Activated CD4-positive, alpha-beta T cell treated with anti-CD3 and anti-CD28 coated beads for 36 hours (primary cell): ENCODE measurements at regions of chr6 and their contacts with region 1.

Region 1: DNA sequence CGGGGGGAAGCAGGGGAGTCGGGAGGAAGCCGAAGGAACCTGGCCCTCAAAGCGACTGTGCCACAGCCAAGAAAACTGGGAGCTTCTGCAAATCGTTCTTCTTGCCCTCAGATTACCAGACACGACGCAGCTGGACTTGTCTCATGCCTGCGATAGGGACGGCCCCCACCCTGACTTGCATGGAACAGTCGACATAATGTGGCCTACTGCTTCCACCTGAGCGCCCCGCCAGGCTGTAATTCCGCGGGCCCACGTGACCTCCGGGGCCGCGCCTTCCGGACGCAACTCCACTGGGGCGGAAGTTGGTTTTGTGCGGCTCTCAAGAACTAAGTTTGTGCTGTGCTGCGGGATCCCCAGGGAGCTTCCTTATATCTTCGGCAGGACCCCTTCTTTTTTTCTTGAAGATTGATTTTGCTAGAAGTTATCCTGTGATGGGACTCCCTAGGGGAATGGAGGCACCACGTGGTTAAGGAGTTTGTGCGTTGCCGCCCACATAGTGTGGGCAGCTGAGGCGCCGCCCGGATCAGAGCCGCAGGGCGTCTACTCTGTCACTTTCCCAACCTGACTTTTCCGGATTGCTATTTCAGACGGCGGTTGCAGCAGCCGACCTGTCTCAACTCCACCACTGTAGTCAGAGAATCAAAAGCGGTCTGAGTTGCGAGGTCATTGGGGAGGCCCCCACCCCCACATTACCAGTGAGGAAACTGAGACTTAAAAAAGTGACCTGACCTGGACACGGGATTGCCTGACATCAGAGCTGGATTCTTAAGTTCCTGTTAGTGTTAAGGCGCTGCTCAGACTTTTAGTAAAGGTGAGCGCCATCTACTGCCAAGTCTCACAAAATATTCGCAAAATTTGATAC is 540 bp upstream of the CD164 start:
- DNase-seq: peak; percentile 95
- ATAC-seq: peak; percentile 67
- H3K4me3 Mint-ChIP-seq: peak overlapping the region; percentile 98
- H3K27ac Mint-ChIP-seq: peak overlapping the region; percentile 99
- H3K4me1 Mint-ChIP-seq: peaks cover 25% of the 10 kb centered on the region
- H3K27me3 Mint-ChIP-seq: no peaks in the 10 kb centered on the region

Region 2: DNA sequence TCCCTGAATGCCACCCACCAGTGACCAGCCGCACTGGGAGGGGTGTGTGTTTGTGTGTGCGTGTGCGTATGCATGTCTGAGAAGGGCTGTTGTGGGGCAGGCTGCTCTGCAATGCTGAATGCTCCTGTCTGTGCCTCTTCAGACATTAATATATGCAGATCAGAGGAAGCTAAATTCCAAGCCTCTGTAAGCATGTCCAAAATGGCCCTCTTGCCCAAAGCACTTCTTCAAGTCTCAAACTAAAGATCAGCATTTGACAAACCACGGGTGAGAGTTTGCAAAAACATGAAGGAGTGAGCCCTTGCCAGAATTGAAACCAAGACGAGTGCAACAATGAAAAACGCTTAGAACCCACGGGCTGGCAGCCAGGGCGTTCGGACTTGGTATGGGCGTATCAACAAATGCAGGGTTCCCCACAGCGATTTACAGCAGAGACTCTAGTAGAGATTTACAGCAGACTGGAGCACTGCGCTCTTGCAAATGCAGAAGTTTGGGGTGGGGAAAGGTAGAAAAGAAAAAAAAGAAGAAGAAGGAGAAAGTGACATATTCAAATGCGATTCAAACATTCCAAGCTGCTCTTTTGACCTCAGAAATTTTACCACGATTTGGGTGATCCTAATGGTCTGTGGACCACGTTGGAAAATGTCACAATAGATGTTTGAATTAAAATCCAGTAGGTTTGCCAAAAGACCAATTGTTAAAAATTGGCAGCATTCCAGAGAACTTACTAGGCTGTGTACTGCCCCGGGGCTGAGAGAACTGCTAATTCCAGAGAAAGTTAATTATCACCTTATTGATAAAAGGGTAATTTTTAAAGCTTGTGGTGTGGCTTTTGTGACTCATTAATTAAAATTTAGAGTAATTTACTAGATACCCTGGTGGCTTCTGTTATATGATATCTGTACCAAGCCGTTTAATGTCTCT is 1562.2 kb before region 1 on chr6:
- CTCF ChIA-PET with region 1: no interaction called
- POLR2A ChIA-PET with region 1: no interaction called
- intact Hi-C with region 1: loop called in 1 of 2 experiments (anchors 5 kb)
- DNase-seq: peak; percentile 60
- ATAC-seq: no peak
- H3K4me3 Mint-ChIP-seq: peak overlapping the region; percentile 87
- H3K27ac Mint-ChIP-seq: peak overlapping the region; percentile 98
- H3K4me1 Mint-ChIP-seq: peaks cover 84% of the 10 kb centered on the region
- H3K27me3 Mint-ChIP-seq: no peaks in the 10 kb centered on the region

Region 3: GRCh38 chr6:108260809-108261569 is 1121.8 kb before region 1 on chr6 and contains the start of gene SNX3:
- CTCF ChIA-PET with region 1: no interaction called
- POLR2A ChIA-PET with region 1: no interaction called
- intact Hi-C with region 1: loop called in 1 of 2 experiments (anchors 5 kb)
- DNase-seq: peak; percentile 94
- ATAC-seq: peak; percentile 93
- H3K4me3 Mint-ChIP-seq: peak within 1 kb of the TSS; percentile 80
- H3K27ac Mint-ChIP-seq: peak within 1 kb of the TSS; percentile 89
- H3K4me1 Mint-ChIP-seq: peaks cover 23% of the 10 kb centered on the region
- H3K27me3 Mint-ChIP-seq: no peaks in the 10 kb centered on the region
- total RNA-seq, gene SNX3: 77.1 to 112 TPM

Region 4: GRCh38 chr6:109095027-109095834 is 287.6 kb before region 1 on chr6 and contains the start of gene CEP57L1:
- CTCF ChIA-PET with region 1: interaction called, 5 read pairs
- POLR2A ChIA-PET with region 1: interaction called, 23 read pairs
- intact Hi-C with region 1: loop called (anchors 1 kb)
- DNase-seq: peak; percentile 97
- ATAC-seq: peak; percentile 79
- H3K4me3 Mint-ChIP-seq: peak within 1 kb of the TSS; percentile 91
- H3K27ac Mint-ChIP-seq: peak within 1 kb of the TSS; percentile 99
- H3K4me1 Mint-ChIP-seq: peaks cover 46% of the 10 kb centered on the region
- H3K27me3 Mint-ChIP-seq: no peaks in the 10 kb centered on the region
- total RNA-seq, gene CEP57L1: 23.8 to 36.9 TPM

Region 5: GRCh38 chr6:109308018-109308492 is 74.8 kb before region 1 on chr6:
- CTCF ChIA-PET with region 1: interaction called, 6 read pairs
- POLR2A ChIA-PET with region 1: interaction called, 3 read pairs
- intact Hi-C with region 1: loop called (anchors 1 to 2 kb)
- DNase-seq: peak; percentile 75
- ATAC-seq: peak; percentile 91
- H3K4me3 Mint-ChIP-seq: no peak overlapping the region
- H3K27ac Mint-ChIP-seq: peak overlapping the region; percentile 76
- H3K4me1 Mint-ChIP-seq: peaks cover 35% of the 10 kb centered on the region
- H3K27me3 Mint-ChIP-seq: no peaks in the 10 kb centered on the region

Region 6: GRCh38 chr6:109322825-109323224 is 60.0 kb before region 1 on chr6:
- CTCF ChIA-PET with region 1: no interaction called
- POLR2A ChIA-PET with region 1: no interaction called
- intact Hi-C with region 1: no loop called
- DNase-seq: no peak
- ATAC-seq: no peak
- H3K4me3 Mint-ChIP-seq: no peak overlapping the region
- H3K27ac Mint-ChIP-seq: no peak overlapping the region
- H3K4me1 Mint-ChIP-seq: peaks cover 10% of the 10 kb centered on the region
- H3K27me3 Mint-ChIP-seq: no peaks in the 10 kb centered on the region

Region 7: GRCh38 chr6:109455502-109456282 is 72.9 kb after region 1 on chr6 and contains the start of gene MICAL1:
- CTCF ChIA-PET with region 1: interaction called, 5 read pairs
- POLR2A ChIA-PET with region 1: interaction called, 3 read pairs
- intact Hi-C with region 1: loop called (anchors 1 kb)
- DNase-seq: peak; percentile 78
- ATAC-seq: peak; percentile 53
- H3K4me3 Mint-ChIP-seq: peak within 1 kb of the TSS; percentile 87
- H3K27ac Mint-ChIP-seq: peak within 1 kb of the TSS; percentile 92
- H3K4me1 Mint-ChIP-seq: peaks cover 58% of the 10 kb centered on the region
- H3K27me3 Mint-ChIP-seq: no peaks in the 10 kb centered on the region
- total RNA-seq, gene MICAL1: 25.1 to 26.3 TPM

Region 8: DNA sequence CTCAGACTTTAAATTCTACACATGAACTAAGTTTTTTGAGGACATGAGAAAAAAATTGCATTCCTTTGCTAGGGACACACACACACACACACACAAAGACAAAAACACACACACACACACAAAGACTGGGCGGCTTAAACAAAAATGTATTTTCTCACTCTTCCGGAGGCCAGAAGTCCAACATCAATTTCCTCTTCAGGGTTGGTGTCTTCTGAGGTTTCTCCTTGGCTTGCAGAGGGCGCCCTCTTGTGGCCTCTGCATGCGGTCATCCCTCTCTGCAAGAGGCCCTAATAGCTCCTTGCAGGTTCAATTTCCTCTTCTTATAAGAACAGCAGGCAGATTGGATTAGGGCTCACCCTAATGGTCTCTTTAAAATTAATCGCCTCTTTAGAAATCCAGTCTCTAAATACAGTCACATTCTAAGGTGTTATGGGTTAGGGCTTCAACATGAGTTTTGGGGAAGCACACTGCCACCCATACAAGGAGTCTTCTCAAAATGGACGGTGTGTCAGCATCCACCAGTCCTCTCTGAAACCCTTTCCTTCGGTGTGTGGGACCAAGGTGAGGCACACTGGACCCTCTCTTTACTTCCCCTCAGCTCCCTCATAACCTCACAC is 656.7 kb after region 1 on chr6:
- CTCF ChIA-PET with region 1: no interaction called
- POLR2A ChIA-PET with region 1: no interaction called
- intact Hi-C with region 1: no loop called
- DNase-seq: peak; percentile 92
- ATAC-seq: peak; percentile 87
- H3K4me3 Mint-ChIP-seq: peak overlapping the region; percentile 79
- H3K27ac Mint-ChIP-seq: peak overlapping the region; percentile 98
- H3K4me1 Mint-ChIP-seq: peaks cover 13% of the 10 kb centered on the region
- H3K27me3 Mint-ChIP-seq: no peaks in the 10 kb centered on the region

Region 9: DNA sequence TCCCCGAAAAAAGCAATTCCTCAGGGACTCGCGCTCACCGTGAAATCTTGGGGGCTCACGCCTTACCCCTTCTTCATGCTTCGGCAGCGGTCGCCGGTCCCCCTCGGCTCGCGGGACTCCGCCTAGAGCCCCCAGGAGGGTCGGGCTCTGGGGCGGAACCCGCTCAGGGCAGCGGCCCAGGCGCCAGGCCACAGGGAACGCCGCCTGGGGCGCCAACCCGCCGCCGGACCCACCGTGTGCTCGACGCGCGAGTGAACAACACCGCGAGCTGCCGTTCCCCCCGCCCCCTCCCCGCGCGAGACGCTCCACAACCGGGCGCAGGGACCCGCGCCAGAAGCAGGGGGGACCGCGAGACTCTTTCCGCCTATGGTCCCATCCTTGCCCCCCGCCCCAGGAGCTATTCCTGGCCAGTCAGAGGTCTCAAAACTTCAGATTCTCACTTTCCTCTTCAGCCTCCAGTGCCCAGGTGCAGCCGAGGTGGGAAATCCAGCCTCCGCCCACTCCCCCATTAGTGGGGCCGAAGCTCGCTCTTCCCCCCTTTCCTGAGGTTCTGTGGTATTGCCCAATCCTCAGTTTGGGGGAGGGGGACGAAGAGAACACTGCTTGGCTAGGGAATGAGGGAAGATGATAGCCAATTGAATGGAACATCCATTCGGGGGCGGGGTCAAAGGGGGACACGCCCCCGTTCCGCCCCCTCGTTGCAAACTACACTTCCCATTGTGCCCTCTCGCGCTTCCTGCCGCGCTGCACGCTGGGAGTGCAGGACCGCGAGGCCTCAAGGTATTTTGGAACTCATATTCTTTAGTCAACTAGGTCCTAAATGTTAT is 796.8 kb after region 1 on chr6 and contains the start of gene WASF1:
- CTCF ChIA-PET with region 1: no interaction called
- POLR2A ChIA-PET with region 1: no interaction called
- intact Hi-C with region 1: loop called (anchors 1 to 5 kb)
- DNase-seq: peak; percentile 94
- ATAC-seq: peak; percentile 89
- H3K4me3 Mint-ChIP-seq: no peak within 1 kb of the TSS
- H3K27ac Mint-ChIP-seq: peak within 1 kb of the TSS; percentile 7
- H3K4me1 Mint-ChIP-seq: peaks cover 5% of the 10 kb centered on the region
- H3K27me3 Mint-ChIP-seq: peaks cover 10% of the 10 kb centered on the region
- total RNA-seq, gene WASF1: 4.2 to 4.6 TPM